AG04449 (cell line): ENCODE measurements at regions of chr1 and their contacts with region 1.

Region 1: DNA sequence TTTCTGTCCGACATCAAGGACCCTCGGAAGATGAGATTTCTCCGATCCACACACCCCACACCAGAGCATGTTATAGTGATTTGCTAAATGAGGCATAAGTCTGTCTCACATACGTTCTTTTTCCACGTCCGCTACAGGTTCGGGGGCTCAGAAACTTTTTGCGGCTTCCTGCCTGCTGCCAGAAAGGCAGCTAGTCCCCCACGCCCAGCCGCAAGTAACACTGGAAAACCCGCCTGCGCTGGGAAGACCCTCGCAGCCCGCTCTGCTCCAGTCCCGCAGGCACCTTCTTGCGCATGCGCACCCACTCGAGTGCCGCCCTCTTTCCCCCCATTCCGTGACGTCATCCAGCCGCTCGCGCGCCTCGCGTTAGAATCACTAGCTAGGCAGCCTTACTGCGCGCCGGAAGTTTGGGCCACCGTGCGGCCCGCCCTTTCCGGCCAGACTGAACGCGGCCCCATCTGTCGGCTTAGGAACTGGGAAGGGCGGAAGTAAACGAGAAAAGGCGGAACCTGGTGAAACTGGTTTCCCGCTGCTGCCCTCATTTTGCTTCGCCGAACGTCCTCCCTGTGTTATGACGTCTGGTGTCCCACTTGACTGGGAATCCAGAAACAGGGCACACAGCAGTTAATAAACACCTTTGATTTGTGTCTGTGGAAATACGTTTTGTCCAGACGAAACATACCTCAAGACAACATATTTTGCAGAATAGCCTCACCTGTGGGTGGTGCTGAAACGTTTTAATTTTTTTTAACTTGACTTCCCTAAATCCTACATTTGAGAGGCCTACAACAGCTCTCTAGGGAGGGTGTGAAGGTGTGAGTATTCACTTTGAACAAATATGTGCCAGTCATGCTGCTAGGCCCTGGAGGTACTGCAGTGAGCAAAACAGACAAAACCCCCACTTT is at the start of gene C1orf74:
- DNase-seq: peak; percentile 77
- H3K4me3 ChIP-seq: peak within 1 kb of the TSS; percentile 94
- CTCF ChIP-seq: no peak

Region 2: DNA sequence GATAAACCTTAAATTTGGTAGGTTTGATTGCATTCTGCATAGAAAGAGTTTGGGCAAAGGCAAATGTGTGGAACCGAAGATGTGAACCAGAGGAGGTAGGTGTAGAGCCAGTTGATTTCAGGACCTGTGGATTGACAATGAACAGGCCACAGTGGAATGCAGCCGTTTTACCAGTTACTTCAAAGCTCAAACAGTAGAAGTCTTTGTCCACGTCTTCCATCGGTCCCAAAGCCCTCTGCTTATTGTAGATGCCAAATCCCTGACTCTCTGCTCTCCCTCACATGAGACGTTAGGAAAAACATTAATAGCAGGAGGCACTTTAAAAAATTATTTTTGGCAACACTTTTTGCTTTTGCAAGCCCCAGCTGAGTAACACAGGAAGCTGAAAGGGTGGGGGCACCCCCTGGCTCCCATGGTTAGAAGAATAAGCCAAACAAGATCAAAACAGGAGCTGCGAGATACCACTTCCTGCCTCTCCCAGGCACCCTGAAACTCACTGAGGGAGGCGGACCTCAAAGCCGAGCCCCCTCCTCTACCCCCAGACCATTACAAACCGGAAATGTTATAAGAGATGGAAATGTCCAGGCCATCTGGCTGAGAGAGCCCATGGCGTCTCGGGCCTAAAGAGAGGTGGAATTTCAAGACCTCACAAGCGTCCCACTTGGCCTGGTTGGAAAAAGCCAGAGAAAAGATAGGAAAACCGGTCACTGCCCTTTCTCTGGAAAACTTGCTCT is 15.2 kb before region 1 on chr1:
- CTCF ChIA-PET with region 1: interaction called, 6 read pairs
- POLR2A ChIA-PET with region 1: interaction called, 10 read pairs
- DNase-seq: peak; percentile 77
- H3K4me3 ChIP-seq: no peak overlapping the region
- CTCF ChIP-seq: no peak